Dorsolateral prefrontal cortex (tissue), 120 donors: ENCODE measurements at regions of chr12 and their contacts with region 1.

Region 1: DNA sequence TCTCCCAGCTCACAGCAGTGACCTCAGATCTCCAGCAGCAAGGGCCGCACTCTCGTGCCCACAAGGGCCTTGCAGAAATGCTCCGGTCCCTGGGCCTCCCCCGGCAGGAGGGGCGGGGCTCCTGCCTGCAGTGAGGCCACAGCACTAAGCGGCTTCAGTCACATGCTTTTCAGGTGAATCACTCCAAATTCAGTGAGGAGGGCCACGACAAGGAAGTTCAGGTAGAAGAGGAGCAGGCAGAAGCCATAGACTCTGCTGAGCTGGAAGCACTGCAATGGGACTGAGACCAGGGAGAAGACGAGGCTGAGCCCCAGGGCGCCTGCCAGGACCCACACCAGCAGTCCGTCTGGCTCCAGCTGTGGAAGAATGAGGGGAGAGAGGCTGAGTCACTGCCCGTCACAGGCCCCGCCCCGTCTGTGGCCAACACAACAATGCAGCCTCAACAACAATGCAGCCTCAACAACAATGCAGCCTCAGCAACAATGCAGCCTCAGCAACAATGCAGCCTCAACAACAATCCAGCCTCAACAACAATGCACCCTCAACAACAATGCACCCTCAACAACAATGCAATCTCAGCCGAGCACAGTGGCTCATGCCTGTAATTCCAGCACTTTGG is 35.2 kb downstream of the SLC8B1 start:
- DNase-seq: peak in 4 of 10 donors; percentile 32 to 49 (median 36)
- H3K4me3 ChIP-seq: no peak overlapping the region
- H3K27ac ChIP-seq: peak overlapping the region in 56 of 59 donors; percentile 13 to 83 (median 64)
- H3K27me3 ChIP-seq: no peaks in the 10 kb centered on the region
- CTCF ChIP-seq: no peak

Region 2: GRCh38 chr12:113196996-113197395 is 102.7 kb before region 1 on chr12:
- intact Hi-C with region 1: loop called in 1 of 2 experiments (anchors 5 kb)
- DNase-seq: peak in 7 of 10 donors; percentile 30 to 70 (median 61)
- H3K4me3 ChIP-seq: no peak overlapping the region
- H3K27ac ChIP-seq: no peak overlapping the region
- H3K27me3 ChIP-seq: no peaks in the 10 kb centered on the region
- CTCF ChIP-seq: peak in 55 of 56 donors; percentile 45 to 82 (median 70)

Region 3: GRCh38 chr12:113271853-113272561 is 27.7 kb before region 1 on chr12:
- intact Hi-C with region 1: loop called in 1 of 2 experiments (anchors 5 kb)
- DNase-seq: peak in 9 of 10 donors; percentile 38 to 83 (median 67)
- H3K4me3 ChIP-seq: peak overlapping the region in 27 of 59 donors; percentile 0 to 33 (median 21)
- H3K27ac ChIP-seq: peak overlapping the region; percentile 41 to 91 (median 83)
- H3K27me3 ChIP-seq: no peaks in the 10 kb centered on the region
- CTCF ChIP-seq: no peak

Region 4: GRCh38 chr12:113341535-113341934 is 41.8 kb after region 1 on chr12:
- intact Hi-C with region 1: no loop called
- DNase-seq: no peak
- H3K4me3 ChIP-seq: no peak overlapping the region
- H3K27ac ChIP-seq: no peak overlapping the region
- H3K27me3 ChIP-seq: no peaks in the 10 kb centered on the region
- CTCF ChIP-seq: no peak